ENCODE measurements at regions of chr12 and their contacts with region 1.

Region 1: DNA sequence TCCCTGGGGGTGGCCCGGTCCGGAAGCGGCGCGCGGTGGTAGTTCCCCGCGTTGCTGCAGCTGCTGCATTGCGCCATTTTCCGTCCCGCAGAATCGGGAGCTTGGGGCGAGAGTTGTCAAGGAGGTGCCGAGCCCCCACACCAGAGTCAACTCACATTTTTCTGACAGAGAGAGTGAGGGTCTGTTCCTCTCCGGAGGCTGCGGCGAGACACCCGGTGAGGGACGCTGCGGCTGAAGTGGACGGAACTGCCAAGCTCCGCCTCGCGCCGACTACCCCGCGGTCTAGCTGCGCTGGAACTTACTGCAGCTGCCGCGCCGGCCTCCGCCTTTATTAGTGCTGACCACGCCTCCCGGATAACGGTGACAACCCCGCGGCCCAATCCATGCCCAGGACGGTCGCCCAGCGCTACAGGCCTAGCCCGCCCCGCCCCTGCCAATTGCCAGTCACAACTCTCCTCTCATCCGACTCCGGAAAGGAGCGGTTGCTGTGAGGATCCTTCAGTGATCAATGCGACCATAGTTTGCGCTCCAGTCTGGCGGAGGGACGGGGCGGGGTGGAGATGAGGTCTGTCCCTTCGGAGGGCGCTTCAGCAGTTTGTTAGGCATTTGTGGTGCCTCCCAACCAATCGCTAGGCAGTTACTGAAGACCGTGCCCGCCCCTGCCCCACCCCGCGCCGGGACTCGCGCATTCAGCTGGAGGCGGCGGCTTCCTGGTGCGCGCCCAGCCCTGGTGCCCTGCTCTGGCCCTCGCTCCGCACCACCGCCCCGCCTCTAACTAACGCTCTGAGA is at the start of gene VAMP1:
- H3K4me3 ChIP-seq: peak within 1 kb of the TSS; percentile 81
- H3K27ac ChIP-seq: peak within 1 kb of the TSS; percentile 35
- H3K4me1 ChIP-seq: peaks cover 2% of the 10 kb centered on the region; the same call in 1 of the 2 replicates
- CTCF ChIP-seq: peak; percentile 42

Region 2: GRCh38 chr12:6323340-6323994 is 147.1 kb before region 1 on chr12:
- CTCF ChIA-PET with region 1: interaction called, 51 read pairs
- POLR2A ChIA-PET with region 1: interaction called, 15 read pairs
- H3K4me3 ChIP-seq: no peak overlapping the region
- H3K27ac ChIP-seq: peak overlapping the region; percentile 55
- H3K4me1 ChIP-seq: peaks cover 11% of the 10 kb centered on the region
- CTCF ChIP-seq: peak; percentile 75

Region 3: GRCh38 chr12:6372403-6373003 is 98.1 kb before region 1 on chr12:
- CTCF ChIA-PET with region 1: interaction called, 10 read pairs
- POLR2A ChIA-PET with region 1: interaction called, 18 read pairs
- H3K4me3 ChIP-seq: no peak overlapping the region
- H3K27ac ChIP-seq: peak overlapping the region; percentile 86
- H3K4me1 ChIP-seq: peaks cover 24% of the 10 kb centered on the region
- CTCF ChIP-seq: no peak

Region 4: DNA sequence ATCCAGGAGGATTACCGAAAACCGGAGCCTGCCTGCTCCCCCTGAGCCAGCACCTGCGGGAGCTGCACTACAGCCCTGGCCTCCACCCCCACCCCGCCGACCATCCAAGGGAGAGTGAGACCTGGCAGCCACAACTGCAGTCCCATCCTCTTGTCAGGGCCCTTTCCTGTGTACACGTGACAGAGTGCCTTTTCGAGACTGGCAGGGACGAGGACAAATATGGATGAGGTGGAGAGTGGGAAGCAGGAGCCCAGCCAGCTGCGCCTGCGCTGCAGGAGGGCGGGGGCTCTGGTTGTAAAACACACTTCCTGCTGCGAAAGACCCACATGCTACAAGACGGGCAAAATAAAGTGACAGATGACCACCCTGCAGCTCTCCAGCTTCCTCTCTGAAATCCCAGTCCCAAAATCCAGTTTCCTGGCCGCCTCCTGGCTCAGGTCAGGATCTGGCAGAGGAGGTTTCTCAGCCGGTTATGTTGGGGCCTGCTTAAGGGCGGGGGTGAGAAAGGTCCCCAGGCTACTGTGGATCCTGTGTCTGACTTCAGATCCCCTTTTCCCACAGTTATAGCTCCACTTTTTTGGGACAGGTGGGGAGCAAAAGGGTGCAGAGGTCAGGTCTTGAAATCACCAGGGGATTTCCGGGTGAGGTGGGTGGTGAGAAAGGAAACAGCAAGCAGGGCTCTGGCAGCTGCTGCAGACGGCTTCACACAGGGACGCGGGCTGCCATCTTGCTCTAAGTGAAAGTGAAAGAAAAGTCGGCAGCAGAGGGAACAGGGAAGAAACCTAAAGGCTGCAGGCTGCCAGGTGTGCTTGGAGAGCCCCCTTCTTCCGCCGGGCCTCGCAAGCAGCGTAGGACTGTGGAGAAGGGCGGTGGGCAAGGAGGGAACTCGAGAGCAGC is 19.0 kb before region 1 on chr12 and contains the start of gene TAPBPL:
- CTCF ChIA-PET with region 1: interaction called, 28 read pairs
- POLR2A ChIA-PET with region 1: interaction called, 8 read pairs
- H3K4me3 ChIP-seq: no peak within 1 kb of the TSS
- H3K27ac ChIP-seq: no peak within 1 kb of the TSS
- H3K4me1 ChIP-seq: no peaks in the 10 kb centered on the region
- CTCF ChIP-seq: no peak

Region 5: GRCh38 chr12:6493497-6494257 is 23.1 kb after region 1 on chr12 and contains the start of gene NCAPD2:
- CTCF ChIA-PET with region 1: interaction called, 7 read pairs
- POLR2A ChIA-PET with region 1: interaction called, 74 read pairs
- H3K4me3 ChIP-seq: peak within 1 kb of the TSS; percentile 93
- H3K27ac ChIP-seq: peak within 1 kb of the TSS; percentile 94
- H3K4me1 ChIP-seq: peaks cover 7% of the 10 kb centered on the region; the same call in 1 of the 2 replicates
- CTCF ChIP-seq: peak; percentile 55; the same call in 1 of the 2 replicates

Measured in HEK293 (cell line).